H1 (cell line): ENCODE measurements at regions of chr22 and their contacts with region 1.

Region 1: GRCh38 chr22:39532215-39533071 is at the start of gene RPS19BP1:
- DNase-seq: peak; percentile 94 to 100
- H3K4me3 ChIP-seq: peak within 1 kb of the TSS; percentile 73 to 97 (median 96)
- H3K27ac ChIP-seq: peak within 1 kb of the TSS; percentile 67
- H3K4me1 ChIP-seq: peaks cover 12 to 45% (median 25%) of the 10 kb centered on the region in 4 experiments
- H3K27me3 ChIP-seq: no peaks in the 10 kb centered on the region
- CTCF ChIP-seq: no peak
- EP300 ChIP-seq: 0 out of 3 replicates have a peak, but pooled peaks of 1 of the 2 experiments have one; percentile 20
- POLR2A ChIP-seq: peak in 1 of 2 experiments; percentile 77; a peak in 2 of 3 replicates
- RAD21 ChIP-seq: no peak
- total RNA-seq, gene RPS19BP1: 77.5 and 77.9 TPM in 2 replicates

Region 2: GRCh38 chr22:39343259-39344048 is 189.0 kb before region 1 on chr22:
- CTCF ChIA-PET with region 1: interaction called, 13 read pairs
- POLR2A ChIA-PET with region 1: no interaction called
- DNase-seq: peak; percentile 34 to 76
- H3K4me3 ChIP-seq: peak overlapping the region in 1 of 4 experiments; percentile 3; a peak in 1 of 8 replicates
- H3K27ac ChIP-seq: no peak overlapping the region
- H3K4me1 ChIP-seq: peaks cover 2 to 3% (median 3%) of the 10 kb centered on the region in 4 experiments; a peak in 4 of 7 replicates
- H3K27me3 ChIP-seq: no peaks in the 10 kb centered on the region
- CTCF ChIP-seq: peak; percentile 74 to 94 (median 75)
- EP300 ChIP-seq: no peak
- POLR2A ChIP-seq: no peak
- RAD21 ChIP-seq: peak; percentile 63 to 74

Region 3: DNA sequence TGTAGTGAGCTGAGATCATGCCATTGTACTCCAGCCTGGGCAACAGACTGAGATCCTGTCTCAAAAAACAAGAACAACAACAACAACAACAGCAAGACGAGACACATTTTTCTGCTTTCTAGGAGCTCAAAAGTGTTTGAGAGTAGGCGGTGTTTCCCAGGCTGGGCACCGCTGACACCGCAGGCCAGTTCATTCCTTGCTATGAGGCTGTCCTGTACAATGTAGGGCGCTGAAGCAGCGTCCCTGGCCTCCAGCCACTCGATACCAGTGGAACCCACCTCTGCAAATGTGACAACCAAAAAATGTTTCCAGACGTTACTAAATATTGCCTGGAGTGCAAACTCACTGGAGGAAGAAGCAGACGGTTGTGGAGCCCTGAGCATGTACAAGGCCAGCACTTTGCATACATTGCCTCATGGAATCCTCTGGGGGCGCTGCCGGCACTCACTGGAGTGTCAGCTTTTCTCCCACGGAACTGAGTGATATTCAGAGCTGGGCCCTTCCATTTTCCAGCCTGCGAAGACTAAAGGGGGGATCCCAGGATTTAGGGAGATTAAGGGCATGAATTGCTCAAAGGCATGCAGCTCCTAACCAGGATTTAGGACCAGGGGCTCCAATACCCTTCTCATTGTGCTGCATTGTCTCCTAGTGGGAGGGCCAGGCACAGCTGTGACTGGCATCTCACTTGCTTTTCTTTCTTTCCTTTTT is 36.2 kb before region 1 on chr22:
- CTCF ChIA-PET with region 1: interaction called, 361 read pairs
- POLR2A ChIA-PET with region 1: interaction called, 10 read pairs
- DNase-seq: peak in 1 of 2 experiments; percentile 76
- H3K4me3 ChIP-seq: no peak overlapping the region
- H3K27ac ChIP-seq: no peak overlapping the region
- H3K4me1 ChIP-seq: no peaks in the 10 kb centered on the region; a peak in 1 of 7 replicates
- H3K27me3 ChIP-seq: peaks cover 0 to 47% (median 16%) of the 10 kb centered on the region in 4 experiments; a peak in 5 of 7 replicates
- CTCF ChIP-seq: peak; percentile 80 to 90 (median 86)
- EP300 ChIP-seq: no peak
- POLR2A ChIP-seq: no peak
- RAD21 ChIP-seq: peak; percentile 33 to 53; a peak in 3 of 4 replicates

Region 4: GRCh38 chr22:39514373-39514973 is 18.0 kb before region 1 on chr22:
- CTCF ChIA-PET with region 1: interaction called, 150 read pairs
- POLR2A ChIA-PET with region 1: interaction called, 72 read pairs
- DNase-seq: peak in 1 of 2 experiments; percentile 88
- H3K4me3 ChIP-seq: no peak overlapping the region
- H3K27ac ChIP-seq: no peak overlapping the region
- H3K4me1 ChIP-seq: peaks cover 0 to 3% (median 2%) of the 10 kb centered on the region in 4 experiments; a peak in 3 of 7 replicates
- H3K27me3 ChIP-seq: peaks cover 17 to 52% (median 47%) of the 10 kb centered on the region in 4 experiments
- CTCF ChIP-seq: peak; percentile 57 to 77 (median 67)
- EP300 ChIP-seq: no peak
- POLR2A ChIP-seq: no peak
- RAD21 ChIP-seq: peak; percentile 47 to 57

Region 5: GRCh38 chr22:39553429-39553828 is 21.0 kb after region 1 on chr22:
- CTCF ChIA-PET with region 1: interaction called, 50 read pairs
- POLR2A ChIA-PET with region 1: interaction called, 5 read pairs
- DNase-seq: no peak
- H3K4me3 ChIP-seq: no peak overlapping the region
- H3K27ac ChIP-seq: no peak overlapping the region
- H3K4me1 ChIP-seq: peaks cover 0 to 8% (median under 1%) of the 10 kb centered on the region in 4 experiments; a peak in 5 of 7 replicates
- H3K27me3 ChIP-seq: peaks cover 24 to 32% (median 29%) of the 10 kb centered on the region in 4 experiments
- CTCF ChIP-seq: no peak
- EP300 ChIP-seq: no peak
- POLR2A ChIP-seq: no peak
- RAD21 ChIP-seq: no peak

Region 6: DNA sequence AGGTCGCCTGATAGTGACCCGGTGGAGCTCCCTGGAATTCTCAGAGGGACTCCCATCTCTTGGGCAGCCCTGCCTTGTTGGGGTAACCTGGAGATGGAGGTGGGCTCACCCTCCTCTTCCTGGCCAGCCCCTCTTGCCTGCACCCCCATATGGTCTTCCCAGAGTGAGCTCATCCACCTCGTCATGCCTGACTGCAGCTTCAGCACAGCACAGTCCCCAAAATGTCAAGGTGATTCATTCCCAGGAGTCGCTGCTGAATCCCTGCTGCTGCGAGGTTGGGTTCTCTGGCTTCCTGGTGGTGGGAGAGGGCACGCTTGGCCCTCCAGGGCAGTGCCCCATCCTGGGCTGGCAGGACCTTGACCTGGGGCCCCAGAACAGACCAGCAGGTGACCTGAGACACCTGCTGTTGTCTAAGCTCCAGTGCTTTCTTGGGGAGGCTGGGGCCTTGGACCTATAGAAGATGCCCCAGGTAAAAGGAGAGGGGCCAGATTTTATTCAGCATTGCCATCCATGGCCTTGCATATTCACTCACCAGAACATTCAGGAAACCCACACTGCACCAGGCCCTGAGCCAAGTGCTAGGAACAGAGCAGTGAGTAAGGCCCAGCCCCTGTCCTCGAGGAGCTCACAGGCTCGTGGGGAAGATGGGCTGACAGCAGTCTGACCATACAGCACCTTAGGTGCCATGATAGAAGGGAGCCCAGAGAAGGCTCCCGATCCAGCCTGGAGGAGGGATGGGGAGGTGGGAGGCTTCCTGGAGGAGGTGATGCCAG is 111.1 kb after region 1 on chr22:
- CTCF ChIA-PET with region 1: no interaction called
- POLR2A ChIA-PET with region 1: no interaction called
- DNase-seq: no peak
- H3K4me3 ChIP-seq: no peak overlapping the region
- H3K27ac ChIP-seq: no peak overlapping the region
- H3K4me1 ChIP-seq: no peaks in the 10 kb centered on the region
- H3K27me3 ChIP-seq: no peaks in the 10 kb centered on the region
- CTCF ChIP-seq: no peak
- EP300 ChIP-seq: no peak
- POLR2A ChIP-seq: no peak
- RAD21 ChIP-seq: no peak

Region 7: GRCh38 chr22:39808081-39808480 is 275.6 kb after region 1 on chr22:
- CTCF ChIA-PET with region 1: interaction called, 11 read pairs
- POLR2A ChIA-PET with region 1: no interaction called
- DNase-seq: peak in 1 of 2 experiments; percentile 73
- H3K4me3 ChIP-seq: no peak overlapping the region
- H3K27ac ChIP-seq: no peak overlapping the region
- H3K4me1 ChIP-seq: peaks cover 0 to 3% (median 0%) of the 10 kb centered on the region in 4 experiments; a peak in 1 of 7 replicates
- H3K27me3 ChIP-seq: peaks cover 0 to 2% (median 0%) of the 10 kb centered on the region in 4 experiments; a peak in 3 of 7 replicates
- CTCF ChIP-seq: peak; percentile 69 to 84 (median 76)
- EP300 ChIP-seq: no peak
- POLR2A ChIP-seq: no peak
- RAD21 ChIP-seq: peak; percentile 62 to 72

Region 8: DNA sequence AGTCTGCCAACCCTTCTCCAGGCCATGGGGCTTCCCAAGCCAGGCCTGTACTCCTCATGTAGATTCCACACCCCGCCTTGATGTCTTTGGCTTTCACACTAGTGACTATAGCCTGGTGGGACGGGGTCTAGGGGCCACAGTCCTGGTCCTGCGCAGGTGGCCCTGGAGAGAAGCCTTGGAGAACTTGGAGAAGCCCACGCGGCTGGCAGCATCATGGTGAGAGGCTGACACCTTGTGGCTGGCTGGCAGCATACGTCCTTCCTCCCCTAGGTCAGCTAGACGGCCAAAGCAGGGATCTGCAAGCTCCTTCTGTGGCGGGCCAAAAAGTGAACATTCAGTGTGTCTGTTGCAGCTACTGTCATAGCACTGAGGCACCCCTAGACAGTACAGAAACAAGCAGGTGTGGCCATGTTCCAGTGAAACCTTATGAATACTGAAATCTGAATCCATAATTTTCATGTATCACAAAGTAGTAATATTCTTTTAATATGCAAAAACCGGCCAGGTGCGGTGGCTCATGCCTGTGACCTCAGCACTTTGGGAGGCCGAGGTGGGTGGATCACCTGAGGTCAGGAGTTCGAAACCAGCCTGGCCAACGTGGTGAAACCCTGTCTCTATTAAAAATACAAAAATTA is 504.3 kb after region 1 on chr22:
- CTCF ChIA-PET with region 1: interaction called, 16 read pairs
- POLR2A ChIA-PET with region 1: interaction called, 4 read pairs
- DNase-seq: peak; percentile 58 to 77
- H3K4me3 ChIP-seq: no peak overlapping the region
- H3K27ac ChIP-seq: no peak overlapping the region
- H3K4me1 ChIP-seq: no peaks in the 10 kb centered on the region
- H3K27me3 ChIP-seq: peaks cover 0 to 6% (median 2%) of the 10 kb centered on the region in 4 experiments; a peak in 2 of 7 replicates
- CTCF ChIP-seq: peak; percentile 92 to 98 (median 98)
- EP300 ChIP-seq: no peak
- POLR2A ChIP-seq: no peak
- RAD21 ChIP-seq: peak; percentile 98